ENCODE measurements at regions of chr17 and their contacts with region 1.

Region 1: DNA sequence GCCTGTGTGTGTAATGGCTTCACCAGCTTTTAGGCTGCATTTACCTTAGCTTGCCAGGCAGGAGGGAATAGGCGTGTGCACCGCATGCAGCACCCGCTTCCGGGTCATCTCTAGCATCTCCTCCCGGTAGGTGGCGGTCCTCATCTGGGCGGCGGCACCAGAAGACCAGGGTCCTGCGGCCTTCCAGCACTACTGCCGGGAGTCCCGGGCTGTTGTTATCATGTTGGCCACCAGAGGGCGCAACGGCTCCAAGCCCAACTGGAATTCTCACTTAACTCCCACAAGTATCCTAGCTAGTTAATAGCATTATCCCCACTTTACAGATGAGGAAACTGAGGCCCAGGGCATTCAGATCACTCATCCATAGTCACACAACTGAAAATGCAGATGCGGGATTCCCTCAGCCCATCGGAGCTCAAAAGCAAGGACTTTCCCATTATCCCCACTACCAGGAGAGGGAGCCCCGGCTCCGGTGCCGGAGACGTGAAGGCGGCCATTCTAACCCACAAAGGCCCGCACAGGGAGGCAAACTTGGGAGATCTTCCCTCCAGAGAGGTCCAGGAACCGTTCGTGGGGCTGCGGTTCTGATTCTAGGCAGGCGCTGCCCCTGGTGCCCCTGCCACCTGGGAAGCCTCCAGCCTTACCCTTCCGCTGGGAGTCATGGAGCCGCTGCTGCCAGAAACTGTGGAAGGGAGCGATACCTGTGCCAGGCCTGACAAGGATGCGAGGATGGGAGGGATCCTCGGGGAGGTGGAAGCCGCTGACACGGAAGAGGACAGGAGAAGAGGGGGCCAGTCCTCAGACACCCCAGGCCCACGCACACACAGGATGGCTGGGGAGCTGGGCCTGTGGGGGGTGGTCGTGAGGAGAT is 23.9 kb downstream of the LGALS9 start:
- DNase-seq: peak; percentile 75 to 93
- H3K4me3 ChIP-seq: no peak overlapping the region
- H3K27ac ChIP-seq: no peak overlapping the region
- H3K4me1 ChIP-seq: no peaks in the 10 kb centered on the region
- H3K27me3 ChIP-seq: no peaks in the 10 kb centered on the region
- CTCF ChIP-seq: peak; percentile 70 to 89 (median 84)
- EP300 ChIP-seq: no peak; a peak in 1 of 3 replicates
- POLR2A ChIP-seq: no peak
- RAD21 ChIP-seq: peak; percentile 57 to 62

Region 2: DNA sequence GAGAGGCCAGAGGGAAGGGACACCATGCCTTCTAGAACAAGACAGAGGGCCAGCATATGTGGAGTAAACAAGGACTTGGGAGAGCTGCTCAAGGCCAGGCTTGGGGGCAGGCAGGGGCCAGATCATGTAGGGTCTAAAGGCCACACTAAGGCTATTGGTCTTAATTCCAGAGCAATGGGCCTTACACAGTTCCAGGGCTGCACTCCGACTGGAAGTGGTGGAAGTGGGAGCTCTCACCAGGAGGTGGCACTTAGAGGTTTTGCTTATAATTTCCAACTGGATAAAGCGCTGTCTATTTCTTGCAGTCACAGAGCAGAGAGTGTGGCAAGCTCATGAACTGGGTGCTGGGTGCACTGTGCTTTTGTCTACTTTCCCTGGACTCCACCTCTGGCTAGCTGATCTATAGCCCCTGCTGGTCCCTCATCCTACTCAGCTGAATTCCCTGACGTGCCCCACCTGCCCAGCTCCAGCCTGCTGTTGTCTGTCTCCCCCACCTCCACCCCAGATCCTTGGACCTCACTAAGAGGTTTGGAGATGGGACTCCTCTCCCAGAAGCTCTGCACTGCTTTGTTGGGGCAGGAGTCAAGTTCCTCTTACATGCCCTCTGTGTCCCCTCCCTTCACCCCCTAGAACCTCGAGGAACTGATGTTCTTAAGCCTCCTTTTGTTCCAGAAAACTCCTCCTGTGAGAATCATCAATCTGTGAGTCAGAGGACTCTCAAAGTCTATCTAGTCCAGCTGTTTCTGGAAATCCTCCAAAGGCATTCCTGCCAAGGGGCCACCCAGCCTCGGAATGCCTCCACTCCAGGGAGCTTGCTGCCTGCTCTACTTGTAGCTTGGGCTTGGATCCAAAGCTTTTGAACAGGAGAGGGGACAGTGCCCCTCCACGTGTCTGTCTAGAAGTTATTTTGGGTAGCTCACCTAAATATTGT is 246.7 kb before region 1 on chr17:
- CTCF ChIA-PET with region 1: interaction called, 13 read pairs
- POLR2A ChIA-PET with region 1: no interaction called
- DNase-seq: no peak
- H3K4me3 ChIP-seq: no peak overlapping the region
- H3K27ac ChIP-seq: no peak overlapping the region
- H3K4me1 ChIP-seq: peaks cover 0 to 4% (median under 1%) of the 10 kb centered on the region in 4 experiments; a peak in 1 of 7 replicates
- H3K27me3 ChIP-seq: 0 out of 7 replicates have a peak, but pooled peaks cover 0 to 4% (median 0%) of the 10 kb centered on the region in 4 experiments
- CTCF ChIP-seq: no peak
- EP300 ChIP-seq: no peak
- POLR2A ChIP-seq: no peak
- RAD21 ChIP-seq: no peak

Region 3: DNA sequence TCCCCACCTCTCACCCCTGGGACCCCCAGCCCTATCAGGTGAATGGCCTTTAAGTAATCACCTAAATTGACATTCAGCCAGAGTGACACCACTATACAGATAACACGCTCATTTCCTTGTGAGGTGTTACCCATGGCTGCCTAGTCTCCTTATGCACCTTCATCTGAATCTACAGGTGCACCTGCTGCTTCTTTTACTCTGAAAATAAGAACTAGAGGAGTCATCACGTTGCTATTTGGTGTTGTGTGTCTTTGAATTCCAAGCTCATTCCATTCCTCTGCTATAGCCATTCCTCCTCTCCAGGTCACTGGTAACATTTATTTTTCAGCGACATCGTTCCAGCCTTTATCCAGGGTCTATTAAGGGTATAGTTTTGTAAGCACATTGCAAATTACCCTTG is 14.1 kb before region 1 on chr17:
- CTCF ChIA-PET with region 1: interaction called, 65 read pairs
- POLR2A ChIA-PET with region 1: interaction called, 3 read pairs
- DNase-seq: no peak
- H3K4me3 ChIP-seq: no peak overlapping the region
- H3K27ac ChIP-seq: no peak overlapping the region
- H3K4me1 ChIP-seq: no peaks in the 10 kb centered on the region
- H3K27me3 ChIP-seq: no peaks in the 10 kb centered on the region
- CTCF ChIP-seq: no peak
- EP300 ChIP-seq: no peak
- POLR2A ChIP-seq: no peak
- RAD21 ChIP-seq: no peak

Region 4: GRCh38 chr17:27741361-27741861 is 86.5 kb after region 1 on chr17:
- CTCF ChIA-PET with region 1: interaction called, 14 read pairs
- POLR2A ChIA-PET with region 1: no interaction called
- DNase-seq: peak in 1 of 2 experiments; percentile 26
- H3K4me3 ChIP-seq: no peak overlapping the region
- H3K27ac ChIP-seq: no peak overlapping the region
- H3K4me1 ChIP-seq: no peaks in the 10 kb centered on the region
- H3K27me3 ChIP-seq: no peaks in the 10 kb centered on the region
- CTCF ChIP-seq: no peak
- EP300 ChIP-seq: no peak
- POLR2A ChIP-seq: no peak
- RAD21 ChIP-seq: no peak

Region 5: DNA sequence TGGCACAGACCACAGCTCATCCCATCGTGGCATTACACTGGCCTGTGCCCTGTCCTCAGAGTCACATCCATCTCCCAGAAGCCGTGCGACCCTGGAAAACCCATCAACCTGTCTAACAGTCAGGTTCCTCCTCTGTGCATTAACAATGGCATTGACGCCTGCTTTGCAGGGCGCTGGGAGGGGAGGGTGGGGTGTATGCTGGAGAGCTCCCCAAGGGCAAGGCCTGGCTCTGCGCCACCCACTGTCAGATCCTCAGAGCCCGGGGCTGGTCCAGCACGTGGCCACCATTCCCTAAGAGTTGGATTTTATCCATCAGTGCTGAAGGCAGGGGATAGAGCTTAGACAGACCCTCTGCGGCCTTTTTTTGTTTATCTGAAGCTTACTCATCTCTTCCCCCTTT is 116.7 kb after region 1 on chr17:
- CTCF ChIA-PET with region 1: interaction called, 10 read pairs
- POLR2A ChIA-PET with region 1: no interaction called
- DNase-seq: no peak
- H3K4me3 ChIP-seq: no peak overlapping the region
- H3K27ac ChIP-seq: no peak overlapping the region
- H3K4me1 ChIP-seq: peaks cover 0 to 6% (median 0%) of the 10 kb centered on the region in 4 experiments; a peak in 1 of 7 replicates
- H3K27me3 ChIP-seq: no peaks in the 10 kb centered on the region
- CTCF ChIP-seq: no peak
- EP300 ChIP-seq: no peak
- POLR2A ChIP-seq: no peak
- RAD21 ChIP-seq: no peak

Measured in H1 (cell line).